Endothelial cell of umbilical vein (primary cell): ENCODE measurements at regions of chr1 and their contacts with region 1.

Region 1: GRCh38 chr1:84174051-84174556 is 30.0 kb downstream of the PRKACB start:
- DNase-seq: peak; percentile 88
- H3K4me3 ChIP-seq: peak overlapping the region in 1 of 3 experiments; percentile 48
- H3K27ac ChIP-seq: peak overlapping the region; percentile 100
- H3K4me1 ChIP-seq: peaks cover 64% of the 10 kb centered on the region
- H3K27me3 ChIP-seq: no peaks in the 10 kb centered on the region
- CTCF ChIP-seq: no peak
- POLR2A ChIP-seq: no peak

Region 2: GRCh38 chr1:84156210-84156621 is 17.9 kb before region 1 on chr1:
- CTCF ChIA-PET with region 1: no interaction called
- POLR2A ChIA-PET with region 1: no interaction called
- dilution Hi-C with region 1: no loop called
- intact Hi-C with region 1: loop called (anchors 1 kb)
- DNase-seq: peak; percentile 89
- H3K4me3 ChIP-seq: no peak overlapping the region
- H3K27ac ChIP-seq: peak overlapping the region; percentile 30
- H3K4me1 ChIP-seq: peaks cover 17% of the 10 kb centered on the region
- H3K27me3 ChIP-seq: no peaks in the 10 kb centered on the region
- CTCF ChIP-seq: no peak
- POLR2A ChIP-seq: no peak

Region 3: DNA sequence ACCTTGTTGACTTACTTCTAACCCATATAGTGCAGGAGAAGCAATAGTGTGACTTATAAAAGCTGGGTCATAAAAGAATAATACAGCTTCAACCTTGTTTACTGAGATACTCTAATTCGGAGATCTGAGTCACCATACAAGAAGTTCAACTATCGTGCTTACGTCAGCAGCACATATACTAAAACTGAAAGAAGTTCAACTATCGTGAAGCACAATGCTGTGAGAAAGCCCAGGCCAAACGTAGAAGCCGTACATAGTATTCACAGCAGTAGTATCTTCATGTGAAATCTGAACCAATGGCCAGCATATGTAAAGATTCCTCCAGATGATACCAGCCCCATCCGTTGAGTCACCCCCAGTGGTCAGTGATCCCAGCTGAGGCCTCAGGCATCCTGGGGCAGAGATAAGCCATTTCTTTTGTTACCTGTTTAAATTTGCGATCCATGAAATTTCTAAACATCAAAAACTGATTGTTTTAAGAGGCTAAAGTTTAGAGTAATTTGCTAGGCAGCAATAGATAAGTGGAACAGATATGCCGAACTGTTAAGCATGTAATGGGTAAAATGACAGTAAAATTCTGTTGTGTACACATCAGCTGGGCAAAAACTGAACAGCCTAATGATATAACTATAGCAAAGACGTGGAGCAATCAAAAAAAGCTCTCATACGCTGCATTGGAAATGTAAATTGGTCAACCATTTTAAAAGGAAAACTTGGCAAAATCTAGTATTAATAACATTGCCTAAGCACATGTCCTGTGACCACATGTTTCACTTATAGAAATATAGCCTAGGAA is 73.5 kb after region 1 on chr1:
- CTCF ChIA-PET with region 1: no interaction called
- POLR2A ChIA-PET with region 1: no interaction called
- dilution Hi-C with region 1: no loop called
- intact Hi-C with region 1: loop called (anchors 1 kb)
- DNase-seq: no peak
- H3K4me3 ChIP-seq: peak overlapping the region in 1 of 3 experiments; percentile 18
- H3K27ac ChIP-seq: peak overlapping the region; percentile 90
- H3K4me1 ChIP-seq: peaks cover 35% of the 10 kb centered on the region
- H3K27me3 ChIP-seq: no peaks in the 10 kb centered on the region
- CTCF ChIP-seq: no peak
- POLR2A ChIP-seq: no peak